Transverse colon (tissue), 4 donors: ENCODE measurements at regions of chr1 and their contacts with region 1.

Region 1: GRCh38 chr1:230917284-230918135 is 49.2 kb upstream of the C1orf198 start:
- DNase-seq: peak; percentile 86
- H3K4me3 ChIP-seq: no peak overlapping the region
- H3K27ac ChIP-seq: no peak overlapping the region
- H3K4me1 ChIP-seq: no peaks in the 10 kb centered on the region
- H3K27me3 ChIP-seq: no peaks in the 10 kb centered on the region
- CTCF ChIP-seq: peak; percentile 60 to 79 (median 75)
- EP300 ChIP-seq: no peak
- POLR2A ChIP-seq: no peak

Region 2: GRCh38 chr1:230824571-230825062 is 92.9 kb before region 1 on chr1:
- in situ Hi-C with region 1: loop called in 2 of 4 experiments (anchors 25 kb)
- intact Hi-C with region 1: no loop called
- DNase-seq: no peak
- H3K4me3 ChIP-seq: no peak overlapping the region
- H3K27ac ChIP-seq: no peak overlapping the region
- H3K4me1 ChIP-seq: peaks cover 0 to 18% (median 13%) of the 10 kb centered on the region in 4 donors
- H3K27me3 ChIP-seq: no peaks in the 10 kb centered on the region
- CTCF ChIP-seq: no peak
- EP300 ChIP-seq: no peak
- POLR2A ChIP-seq: no peak

Region 3: DNA sequence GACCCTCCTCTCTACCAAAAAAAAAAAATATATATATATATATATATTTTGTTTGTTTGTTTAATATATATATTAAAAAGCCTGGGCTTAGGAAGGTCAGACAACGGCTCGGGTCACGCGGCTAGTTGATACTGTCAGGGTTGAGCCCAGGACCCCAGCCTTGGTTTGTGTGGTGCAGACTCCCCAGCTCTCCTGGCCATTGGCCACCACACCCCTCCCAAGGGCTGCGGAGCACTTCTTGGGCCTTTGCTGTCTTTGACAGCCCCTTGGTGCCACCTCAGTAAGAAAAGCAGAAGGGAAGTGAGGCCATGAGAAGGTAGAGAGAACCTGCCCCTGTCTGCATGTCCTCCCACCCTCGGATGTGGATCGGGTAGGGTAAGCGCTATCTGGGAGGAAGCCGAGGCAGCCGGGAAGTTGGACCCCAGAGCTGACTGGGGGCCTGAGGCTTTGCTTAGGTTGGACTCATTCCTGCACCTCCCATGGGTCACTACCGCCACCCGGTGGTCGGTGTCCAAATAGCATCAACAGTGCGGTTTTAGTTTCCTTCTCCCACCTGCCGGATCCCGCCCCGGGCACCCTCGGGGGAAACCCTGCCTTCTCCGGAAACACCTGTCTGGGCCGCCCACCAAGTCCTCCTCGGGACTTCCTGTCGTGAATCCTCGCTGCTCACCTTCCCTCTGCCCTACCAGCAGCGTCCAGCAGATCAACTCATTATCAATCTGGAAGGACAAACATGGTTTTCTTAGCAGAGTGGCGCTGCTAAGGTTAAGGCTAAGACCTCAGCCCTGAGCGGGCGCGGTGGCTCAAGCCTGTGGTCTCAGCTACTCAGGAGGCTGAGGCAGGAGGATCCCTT is 293.7 kb after region 1 on chr1:
- in situ Hi-C with region 1: loop called (anchors 10 to 25 kb)
- intact Hi-C with region 1: no loop called
- DNase-seq: peak; percentile 94
- H3K4me3 ChIP-seq: peak overlapping the region; percentile 5 to 51 (median 40)
- H3K27ac ChIP-seq: peak overlapping the region; percentile 38 to 68 (median 56)
- H3K4me1 ChIP-seq: peaks cover 0 to 7% (median 6%) of the 10 kb centered on the region in 4 donors
- H3K27me3 ChIP-seq: no peaks in the 10 kb centered on the region
- CTCF ChIP-seq: peak; percentile 87 to 93 (median 89)
- EP300 ChIP-seq: no peak
- POLR2A ChIP-seq: no peak